Activated CD4-positive, alpha-beta memory T cell treated with anti-CD3 and anti-CD28 coated beads, Interleukin-2, amount 10 ng/mL, durations not matched to agents 7 days and 5 days (primary cell): ENCODE measurements at regions of chr1 and their contacts with region 1.

Region 1: GRCh38 chr1:25904943-25905679 is 1.1 kb downstream of the STMN1 start:
- DNase-seq: peak; percentile 98
- H3K4me3 Mint-ChIP-seq: peak overlapping the region; percentile 94
- H3K27ac Mint-ChIP-seq: peak overlapping the region; percentile 87
- H3K4me1 Mint-ChIP-seq: peaks cover 45% of the 10 kb centered on the region
- H3K27me3 Mint-ChIP-seq: peaks cover 21% of the 10 kb centered on the region

Region 2: DNA sequence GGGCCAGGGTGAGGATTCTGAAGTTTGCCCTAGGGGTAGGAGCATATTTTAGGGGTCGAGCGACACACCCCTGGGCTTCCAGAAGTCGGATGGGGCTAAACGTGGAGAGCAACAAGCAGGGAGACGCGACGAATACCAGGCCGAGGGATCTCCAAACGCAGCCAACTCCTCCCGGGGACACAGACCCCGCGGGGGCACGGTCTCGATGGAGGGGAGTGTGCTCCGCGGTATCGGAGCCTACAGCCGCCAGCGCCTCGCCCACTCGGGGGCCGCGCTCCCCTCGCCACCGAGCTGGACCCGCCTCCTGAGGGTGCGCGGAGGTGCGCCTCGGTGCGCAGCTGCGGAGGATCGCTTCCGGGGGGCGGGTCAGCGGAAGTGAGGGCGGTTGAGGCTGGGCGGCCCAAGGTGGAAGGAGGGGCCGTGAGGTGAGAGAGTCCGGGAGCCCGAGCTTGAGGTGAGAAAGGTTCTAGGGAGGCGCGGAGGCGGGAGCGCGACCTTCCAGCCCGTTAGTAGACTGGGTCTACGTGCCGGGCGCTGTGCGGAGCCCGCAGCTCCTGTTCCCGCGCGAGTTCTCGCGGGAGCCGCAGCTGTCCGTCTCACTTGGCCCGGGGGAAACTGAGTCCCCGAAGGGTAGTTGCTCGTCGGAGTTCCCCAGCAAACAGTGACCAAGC is 85.4 kb before region 1 on chr1 and contains the start of gene MTFR1L:
- CTCF ChIA-PET with region 1: no interaction called
- POLR2A ChIA-PET with region 1: interaction called, 21 read pairs
- DNase-seq: peak; percentile 95
- H3K4me3 Mint-ChIP-seq: peak within 1 kb of the TSS; percentile 96
- H3K27ac Mint-ChIP-seq: peak within 1 kb of the TSS; percentile 93
- H3K4me1 Mint-ChIP-seq: peaks cover 38% of the 10 kb centered on the region
- H3K27me3 Mint-ChIP-seq: no peaks in the 10 kb centered on the region
- total RNA-seq, gene MTFR1L: 36.6 to 37.7 TPM

Region 3: GRCh38 chr1:25848531-25848930 is 56.6 kb before region 1 on chr1:
- CTCF ChIA-PET with region 1: no interaction called
- POLR2A ChIA-PET with region 1: no interaction called
- DNase-seq: no peak
- H3K4me3 Mint-ChIP-seq: no peak overlapping the region
- H3K27ac Mint-ChIP-seq: no peak overlapping the region
- H3K4me1 Mint-ChIP-seq: no peaks in the 10 kb centered on the region
- H3K27me3 Mint-ChIP-seq: no peaks in the 10 kb centered on the region

Region 4: DNA sequence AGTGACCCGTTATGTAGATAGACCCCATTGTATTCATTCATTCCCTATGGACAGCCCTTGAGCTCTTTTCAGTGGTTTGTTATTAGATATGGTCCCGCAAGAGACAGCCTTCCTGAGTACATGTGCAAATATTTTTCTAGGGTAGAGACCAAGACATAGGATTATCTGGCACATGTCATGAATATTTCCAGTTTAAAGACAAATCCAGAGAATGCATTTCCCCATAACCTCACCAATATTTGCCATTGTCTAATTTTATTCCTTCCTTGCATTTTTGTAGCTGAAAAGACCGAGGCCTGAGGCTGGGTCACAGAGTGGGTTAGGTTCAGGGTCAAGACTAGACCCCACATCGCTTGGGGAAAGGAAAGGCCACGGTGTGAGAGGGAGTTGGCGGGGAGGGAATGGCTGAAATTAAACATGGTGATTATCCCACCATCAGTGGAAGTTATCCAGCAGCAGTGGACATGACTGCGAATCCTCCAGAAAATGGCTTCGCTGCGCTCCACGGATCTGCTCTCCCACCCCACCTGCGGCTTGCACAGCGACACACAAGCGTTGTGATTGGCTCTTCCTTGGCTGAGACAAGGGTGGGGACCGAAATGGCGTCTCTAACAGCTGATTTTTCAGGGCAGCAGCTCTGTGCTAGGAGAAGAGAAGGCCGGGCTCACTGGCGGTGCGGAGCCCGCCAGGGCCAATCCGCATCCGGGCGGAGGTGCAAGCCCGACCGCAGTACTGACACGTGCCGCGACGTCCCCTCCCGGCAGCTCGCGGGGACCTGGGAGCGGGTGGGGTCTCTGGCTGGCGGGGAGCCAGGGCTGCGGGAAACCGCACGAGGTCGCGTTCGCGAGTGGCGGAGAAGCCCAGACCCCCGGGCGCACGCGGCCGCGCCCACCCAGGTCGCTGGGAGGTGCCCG is 17.2 kb after region 1 on chr1:
- CTCF ChIA-PET with region 1: interaction called, 5 read pairs
- POLR2A ChIA-PET with region 1: interaction called, 25 read pairs
- DNase-seq: peak; percentile 62
- H3K4me3 Mint-ChIP-seq: peak overlapping the region; percentile 62
- H3K27ac Mint-ChIP-seq: no peak overlapping the region
- H3K4me1 Mint-ChIP-seq: peaks cover 29% of the 10 kb centered on the region
- H3K27me3 Mint-ChIP-seq: peaks cover 41% of the 10 kb centered on the region

Region 5: GRCh38 chr1:25990702-25991395 is 85.7 kb after region 1 on chr1:
- CTCF ChIA-PET with region 1: interaction called, 82 read pairs
- POLR2A ChIA-PET with region 1: interaction called, 268 read pairs
- DNase-seq: peak; percentile 61
- H3K4me3 Mint-ChIP-seq: peak overlapping the region; percentile 78
- H3K27ac Mint-ChIP-seq: peak overlapping the region; percentile 72
- H3K4me1 Mint-ChIP-seq: peaks cover 38% of the 10 kb centered on the region
- H3K27me3 Mint-ChIP-seq: no peaks in the 10 kb centered on the region

Region 6: GRCh38 chr1:25997828-25998761 is 93.0 kb after region 1 on chr1 and contains the start of gene PAFAH2:
- CTCF ChIA-PET with region 1: interaction called, 82 read pairs
- POLR2A ChIA-PET with region 1: interaction called, 268 read pairs
- DNase-seq: peak; percentile 97
- H3K4me3 Mint-ChIP-seq: peak within 1 kb of the TSS; percentile 84
- H3K27ac Mint-ChIP-seq: peak within 1 kb of the TSS; percentile 91
- H3K4me1 Mint-ChIP-seq: peaks cover 20% of the 10 kb centered on the region
- H3K27me3 Mint-ChIP-seq: no peaks in the 10 kb centered on the region
- total RNA-seq, gene PAFAH2: 9.4 to 10.1 TPM